ENCODE measurements at regions of chr22 and their contacts with region 1.

Region 1: GRCh38 chr22:30920407-30920806 is 48.2 kb downstream of the MORC2 start:
- DNase-seq: peak; percentile 65 to 84 (median 78)
- ATAC-seq: peak; percentile 88
- H3K4me3 ChIP-seq: no peak overlapping the region
- H3K4me3 Mint-ChIP-seq: peak overlapping the region; percentile 62 to 89 (median 77)
- H3K27ac ChIP-seq: peak overlapping the region; percentile 43
- H3K27ac Mint-ChIP-seq: peak overlapping the region; percentile 5 to 90 (median 28)
- H3K4me1 ChIP-seq: peaks cover 6 to 16% of the 10 kb centered on the region in 2 donors
- H3K4me1 Mint-ChIP-seq: peaks cover 4 to 29% (median 21%) of the 10 kb centered on the region in 7 donors
- H3K27me3 ChIP-seq: no peaks in the 10 kb centered on the region
- H3K27me3 Mint-ChIP-seq: peaks cover 0 to 2% (median 0%) of the 10 kb centered on the region in 5 donors

Region 2: GRCh38 chr22:30763815-30764686 is 156.4 kb before region 1 on chr22:
- CTCF ChIA-PET with region 1: interaction called, 9 read pairs
- POLR2A ChIA-PET with region 1: no interaction called
- intact Hi-C with region 1: loop called (anchors 1 kb)
- DNase-seq: peak in 8 of 9 donors; percentile 41 to 74 (median 66)
- ATAC-seq: peak; percentile 72
- H3K4me3 ChIP-seq: no peak overlapping the region
- H3K4me3 Mint-ChIP-seq: no peak overlapping the region
- H3K27ac ChIP-seq: no peak overlapping the region
- H3K27ac Mint-ChIP-seq: no peak overlapping the region
- H3K4me1 ChIP-seq: no peaks in the 10 kb centered on the region
- H3K4me1 Mint-ChIP-seq: peaks cover 0 to 3% (median 0%) of the 10 kb centered on the region in 7 donors
- H3K27me3 ChIP-seq: no peaks in the 10 kb centered on the region
- H3K27me3 Mint-ChIP-seq: no peaks in the 10 kb centered on the region

Region 3: DNA sequence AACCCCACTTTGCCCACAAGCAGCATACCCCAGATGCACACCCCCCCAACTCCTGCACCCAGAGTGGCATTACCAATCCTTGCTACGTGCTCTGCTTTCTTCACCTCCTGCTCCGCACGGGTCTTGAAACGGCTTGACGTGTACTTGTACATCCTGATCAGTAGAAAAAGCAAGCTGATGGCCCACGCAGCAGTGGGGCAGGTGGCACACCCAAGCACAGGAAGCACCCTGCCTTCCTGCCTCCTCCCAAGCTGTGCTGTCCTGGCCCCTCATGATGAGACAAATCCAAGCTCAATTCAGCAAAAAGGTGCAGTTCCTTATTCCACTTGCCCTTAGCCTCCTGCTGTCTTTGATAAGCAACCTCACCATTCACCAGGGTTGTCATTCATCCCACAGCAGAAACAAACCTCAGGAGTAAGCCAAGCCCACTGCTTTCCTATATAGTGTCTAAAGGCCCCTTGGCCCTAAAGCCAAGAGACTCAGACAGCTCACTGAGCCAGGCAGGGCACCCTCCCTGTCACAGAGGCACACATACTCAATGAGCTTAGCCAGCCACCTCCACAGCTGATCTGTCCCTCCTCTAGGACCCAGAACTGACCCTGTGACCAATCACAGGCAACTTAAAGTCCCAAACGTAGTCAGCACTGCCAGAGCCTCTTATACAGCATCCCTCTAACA is 20.4 kb after region 1 on chr22:
- CTCF ChIA-PET with region 1: interaction called, 6 read pairs
- POLR2A ChIA-PET with region 1: interaction called, 104 read pairs
- intact Hi-C with region 1: loop called (anchors 1 to 2 kb)
- DNase-seq: peak in 7 of 9 donors; percentile 52 to 72 (median 64)
- ATAC-seq: peak; percentile 74
- H3K4me3 ChIP-seq: peak overlapping the region; percentile 67
- H3K4me3 Mint-ChIP-seq: peak overlapping the region; percentile 81 to 95 (median 88)
- H3K27ac ChIP-seq: peak overlapping the region; percentile 78
- H3K27ac Mint-ChIP-seq: peak overlapping the region; percentile 85 to 97 (median 94)
- H3K4me1 ChIP-seq: peaks cover 43 to 93% of the 10 kb centered on the region in 2 donors
- H3K4me1 Mint-ChIP-seq: peaks cover 53 to 97% (median 93%) of the 10 kb centered on the region in 7 donors
- H3K27me3 ChIP-seq: no peaks in the 10 kb centered on the region
- H3K27me3 Mint-ChIP-seq: no peaks in the 10 kb centered on the region

Region 4: DNA sequence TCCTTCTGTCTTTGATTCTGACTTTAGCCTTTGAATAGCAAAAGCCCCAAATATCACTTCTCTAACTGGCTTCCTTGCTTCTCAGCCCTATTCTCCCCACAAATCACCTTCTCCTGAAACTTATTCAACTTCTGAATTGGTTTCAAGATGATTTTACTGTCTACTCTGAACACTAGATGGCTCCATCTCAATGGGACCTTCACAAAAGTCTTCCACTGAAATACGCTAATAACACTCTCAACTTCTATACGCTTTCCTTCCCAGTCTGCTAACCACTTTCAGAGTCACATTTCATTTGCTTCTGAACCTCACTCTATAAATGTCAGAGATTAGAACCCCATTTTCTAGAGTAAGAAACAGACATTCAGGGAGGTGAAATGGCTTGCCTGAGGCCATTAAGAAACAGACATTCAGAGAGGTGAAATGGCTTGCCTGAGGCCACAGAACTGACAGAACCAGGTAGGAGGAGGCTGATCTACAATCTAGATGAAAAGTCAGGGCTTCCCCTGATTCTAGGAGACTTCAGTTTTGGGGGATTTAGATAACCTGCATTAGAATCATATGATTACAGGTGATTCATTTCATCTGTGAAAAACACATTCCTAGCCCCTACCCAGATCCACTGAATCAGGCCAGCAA is 27.5 kb after region 1 on chr22:
- CTCF ChIA-PET with region 1: interaction called, 5 read pairs
- POLR2A ChIA-PET with region 1: interaction called, 104 read pairs
- intact Hi-C with region 1: loop called in 1 of 2 experiments (anchors 2 kb)
- DNase-seq: peak in 7 of 9 donors; percentile 29 to 67 (median 52)
- ATAC-seq: peak; percentile 72
- H3K4me3 ChIP-seq: no peak overlapping the region
- H3K4me3 Mint-ChIP-seq: no peak overlapping the region
- H3K27ac ChIP-seq: peak overlapping the region; percentile 4
- H3K27ac Mint-ChIP-seq: no peak overlapping the region
- H3K4me1 ChIP-seq: peaks cover 11 to 63% of the 10 kb centered on the region in 2 donors
- H3K4me1 Mint-ChIP-seq: peaks cover 52 to 72% (median 65%) of the 10 kb centered on the region in 7 donors
- H3K27me3 ChIP-seq: no peaks in the 10 kb centered on the region
- H3K27me3 Mint-ChIP-seq: no peaks in the 10 kb centered on the region

Measured in naive thymus-derived CD4-positive, alpha-beta T cell (primary cell).